PC-3 (cell line): ENCODE measurements at regions of chr2 and their contacts with region 1.

Region 1: DNA sequence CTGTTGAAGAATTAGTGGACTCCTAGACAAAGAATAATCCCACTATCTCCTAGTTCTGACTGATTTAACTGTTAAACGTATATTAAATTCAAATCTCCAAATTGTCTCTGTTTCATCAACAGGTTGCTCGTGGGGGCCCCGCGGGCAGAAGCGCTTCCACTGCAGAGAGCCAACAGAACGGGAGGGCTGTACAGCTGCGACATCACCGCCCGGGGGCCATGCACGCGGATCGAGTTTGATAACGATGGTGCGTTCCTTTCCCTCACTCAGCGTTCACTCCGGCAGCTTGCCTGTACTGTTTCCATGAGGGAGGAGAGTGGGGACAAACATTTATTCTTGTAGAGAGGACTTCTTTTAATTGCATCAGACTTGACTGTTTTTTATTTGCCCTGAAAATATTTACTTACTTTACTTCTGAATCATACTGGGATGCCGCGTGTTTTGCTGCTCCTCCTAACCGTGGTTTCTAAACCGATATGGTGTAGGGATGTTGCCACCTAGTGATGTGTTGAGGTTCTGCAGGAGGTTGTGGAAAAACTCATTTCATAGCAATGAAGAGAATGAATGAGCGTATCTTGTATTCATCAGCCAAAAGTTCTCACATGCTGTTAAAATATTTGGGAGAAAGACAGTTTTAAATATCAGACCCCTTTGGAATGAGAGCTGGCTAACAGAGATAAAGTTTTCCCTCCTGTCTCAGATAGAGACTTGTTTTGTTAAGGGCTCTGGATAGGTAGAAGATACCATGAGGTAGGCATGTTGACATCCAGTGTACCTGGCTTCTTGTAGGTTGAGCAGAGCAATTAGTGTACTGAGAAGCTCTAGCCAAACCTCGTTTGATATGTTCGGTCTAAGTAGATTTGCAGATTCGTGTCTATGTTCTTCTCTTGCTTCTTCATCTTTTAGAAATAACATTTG is 38.3 kb downstream of the ITGA6 start:
- DNase-seq: peak; percentile 95
- ATAC-seq: peak; percentile 58
- H3K4me3 ChIP-seq: peak overlapping the region; percentile 58
- H3K27ac ChIP-seq: peak overlapping the region; percentile 73
- H3K4me1 ChIP-seq: peaks cover 49% of the 10 kb centered on the region
- H3K27me3 ChIP-seq: no peaks in the 10 kb centered on the region
- CTCF ChIP-seq: peak; percentile 94

Region 2: GRCh38 chr2:171703574-171704347 is 761.9 kb before region 1 on chr2:
- CTCF ChIA-PET with region 1: interaction called, 5 read pairs
- POLR2A ChIA-PET with region 1: no interaction called
- intact Hi-C with region 1: loop called (anchors 10 kb)
- DNase-seq: peak; percentile 57
- ATAC-seq: peak; percentile 39; the same call in 1 of the 2 replicates
- H3K4me3 ChIP-seq: no peak overlapping the region
- H3K27ac ChIP-seq: no peak overlapping the region
- H3K4me1 ChIP-seq: peaks cover 7% of the 10 kb centered on the region
- H3K27me3 ChIP-seq: no peaks in the 10 kb centered on the region
- CTCF ChIP-seq: peak; percentile 66

Region 3: DNA sequence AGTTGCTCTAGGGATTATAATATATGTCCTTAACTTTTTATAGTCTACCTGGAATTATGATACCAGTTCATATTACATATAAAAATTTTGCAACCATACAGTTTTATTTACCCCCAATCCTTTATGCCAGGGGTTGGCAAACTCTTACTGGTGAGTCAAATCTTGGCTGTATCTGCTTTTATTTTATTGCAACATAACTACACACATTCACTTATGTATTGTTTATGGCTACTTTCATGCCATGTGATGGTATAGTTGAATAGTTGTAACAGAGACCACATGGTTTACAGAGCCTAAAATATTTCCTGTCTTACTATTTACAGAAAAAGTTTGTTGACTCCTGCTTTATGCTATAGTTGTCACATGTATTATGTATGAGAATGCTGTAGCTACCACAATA is 337.2 kb before region 1 on chr2:
- CTCF ChIA-PET with region 1: no interaction called
- POLR2A ChIA-PET with region 1: no interaction called
- intact Hi-C with region 1: loop called (anchors 2 kb)
- DNase-seq: peak; percentile 95
- ATAC-seq: peak; percentile 97
- H3K4me3 ChIP-seq: no peak overlapping the region
- H3K27ac ChIP-seq: peak overlapping the region; percentile 50
- H3K4me1 ChIP-seq: peaks cover 11% of the 10 kb centered on the region
- H3K27me3 ChIP-seq: no peaks in the 10 kb centered on the region
- CTCF ChIP-seq: no peak

Region 4: DNA sequence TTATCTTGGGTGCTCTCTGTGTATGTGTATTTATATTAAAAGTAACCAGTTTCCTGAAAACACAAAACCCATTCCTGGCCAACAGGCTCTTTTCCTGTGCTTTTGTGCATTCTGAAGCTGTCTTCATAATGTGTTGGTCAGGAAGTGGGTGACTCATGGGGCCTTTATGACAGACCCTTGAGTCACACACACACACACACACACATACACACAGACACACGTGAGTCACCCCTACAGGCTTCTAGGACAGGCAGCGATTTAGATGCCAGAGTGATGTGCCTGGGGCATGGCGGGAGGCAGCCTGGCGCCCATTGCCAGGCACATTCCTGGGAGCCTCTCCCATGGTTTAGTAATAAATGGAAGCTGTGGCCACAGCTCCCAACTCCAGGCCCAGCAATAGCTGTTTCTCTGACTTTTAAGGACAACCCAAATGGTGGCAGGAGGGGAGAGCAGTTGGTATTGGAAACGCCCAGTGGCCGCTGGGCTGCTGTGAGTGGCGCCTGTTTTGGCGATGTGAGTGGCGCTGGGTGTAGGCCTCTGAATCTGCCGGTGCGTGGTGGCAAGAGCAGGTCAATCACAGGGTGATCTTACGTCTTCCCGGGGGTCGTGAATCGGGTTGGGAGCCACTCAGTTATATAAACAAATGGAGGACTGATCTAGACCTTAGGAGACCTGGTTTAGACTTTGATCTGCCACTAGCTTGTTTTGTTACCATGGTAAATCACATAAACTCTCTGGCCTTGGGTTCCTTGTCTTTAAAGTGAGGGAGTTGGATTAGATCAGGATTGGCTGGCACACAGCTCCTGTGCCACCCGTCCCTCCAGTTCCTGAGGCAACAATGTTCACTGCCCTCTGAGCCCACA is 212.3 kb before region 1 on chr2:
- CTCF ChIA-PET with region 1: interaction called, 3 read pairs
- POLR2A ChIA-PET with region 1: interaction called, 3 read pairs
- intact Hi-C with region 1: loop called (anchors 1 kb)
- DNase-seq: peak; percentile 98
- ATAC-seq: peak; percentile 60
- H3K4me3 ChIP-seq: no peak overlapping the region
- H3K27ac ChIP-seq: peak overlapping the region; percentile 90
- H3K4me1 ChIP-seq: peaks cover 55% of the 10 kb centered on the region
- H3K27me3 ChIP-seq: no peaks in the 10 kb centered on the region
- CTCF ChIP-seq: no peak

Region 5: GRCh38 chr2:172339371-172340010 is 126.2 kb before region 1 on chr2:
- CTCF ChIA-PET with region 1: interaction called, 17 read pairs
- POLR2A ChIA-PET with region 1: no interaction called
- intact Hi-C with region 1: loop called (anchors 1 kb)
- DNase-seq: no peak
- ATAC-seq: no peak
- H3K4me3 ChIP-seq: no peak overlapping the region
- H3K27ac ChIP-seq: no peak overlapping the region
- H3K4me1 ChIP-seq: peaks cover 31% of the 10 kb centered on the region
- H3K27me3 ChIP-seq: no peaks in the 10 kb centered on the region
- CTCF ChIP-seq: no peak

Region 6: GRCh38 chr2:172442072-172442895 is 23.4 kb before region 1 on chr2:
- CTCF ChIA-PET with region 1: interaction called, 17 read pairs
- POLR2A ChIA-PET with region 1: interaction called, 3 read pairs
- intact Hi-C with region 1: loop called (anchors 1 kb)
- DNase-seq: peak; percentile 99
- ATAC-seq: peak; percentile 81
- H3K4me3 ChIP-seq: peak overlapping the region; percentile 47
- H3K27ac ChIP-seq: peak overlapping the region; percentile 97
- H3K4me1 ChIP-seq: peaks cover 77% of the 10 kb centered on the region
- H3K27me3 ChIP-seq: no peaks in the 10 kb centered on the region
- CTCF ChIP-seq: no peak